IMR-90 (cell line): ENCODE measurements at regions of chr5 and their contacts with region 1.

Region 1: DNA sequence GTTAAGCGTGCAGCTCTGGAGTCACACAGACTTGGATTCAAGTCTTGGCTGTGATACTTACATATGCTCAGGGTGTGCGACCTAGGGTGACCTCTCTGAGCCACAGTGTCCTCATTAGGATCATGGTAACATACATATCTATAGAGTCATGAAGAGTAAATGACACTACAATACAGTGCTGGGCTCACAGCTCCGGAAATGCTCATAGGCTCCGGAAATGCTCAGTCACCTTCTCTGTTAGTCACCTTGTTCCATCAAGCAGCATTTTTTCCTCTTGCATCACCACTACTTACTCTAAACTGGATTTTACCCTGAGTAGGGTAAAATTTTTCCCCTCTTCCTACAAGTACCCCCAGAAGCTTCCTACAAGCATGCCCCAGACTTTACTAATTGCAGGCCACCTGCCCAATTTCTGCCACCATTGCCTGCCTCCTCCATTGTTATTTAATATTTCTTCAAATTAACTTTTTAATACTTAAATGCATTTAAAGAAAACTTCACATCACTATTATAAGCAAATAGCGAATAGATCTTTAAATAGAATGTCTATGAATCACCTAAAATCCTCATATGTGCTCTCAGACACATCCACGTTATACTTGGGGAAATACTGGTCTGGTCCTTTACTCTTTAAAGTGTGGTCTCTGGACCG is 147.6 kb upstream of the SPRY4 start:
- DNase-seq: peak; percentile 96
- ATAC-seq: peak; percentile 90
- H3K4me3 ChIP-seq: no peak overlapping the region
- H3K27ac ChIP-seq: peak overlapping the region; percentile 62; the same call in 1 of the 2 replicates
- H3K4me1 ChIP-seq: peaks cover 5% of the 10 kb centered on the region
- H3K27me3 ChIP-seq: no peaks in the 10 kb centered on the region
- CTCF ChIP-seq: no peak
- POLR2A ChIP-seq: no peak
- RAD21 ChIP-seq: no peak

Region 2: DNA sequence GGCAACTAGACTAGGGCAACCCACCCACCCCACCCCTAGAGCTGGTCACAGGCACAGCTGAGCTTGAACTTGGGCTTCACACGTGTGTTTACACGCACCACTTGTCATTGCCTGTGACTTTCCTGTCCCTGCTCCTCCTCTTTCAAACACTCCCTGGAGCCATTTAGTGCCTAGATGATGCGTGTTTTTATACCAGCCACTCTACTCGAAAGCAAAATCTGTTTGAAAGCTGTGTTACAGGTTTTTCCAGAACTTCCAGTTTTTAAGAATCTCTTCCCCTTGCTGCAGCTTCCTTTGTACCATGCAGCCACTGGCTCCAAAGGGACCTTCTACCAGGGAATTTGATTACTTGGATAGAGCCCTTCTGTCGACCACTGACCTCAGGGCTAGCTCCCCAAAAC is 68.9 kb before region 1 on chr5:
- CTCF ChIA-PET with region 1: no interaction called
- POLR2A ChIA-PET with region 1: no interaction called
- dilution Hi-C with region 1: no loop called
- in situ Hi-C with region 1: no loop called
- intact Hi-C with region 1: no loop called
- DNase-seq: no peak
- ATAC-seq: no peak
- H3K4me3 ChIP-seq: no peak overlapping the region
- H3K27ac ChIP-seq: no peak overlapping the region
- H3K4me1 ChIP-seq: 0 out of 2 replicates have a peak, but pooled peaks cover 2% of the 10 kb centered on the region
- H3K27me3 ChIP-seq: no peaks in the 10 kb centered on the region
- CTCF ChIP-seq: no peak
- POLR2A ChIP-seq: no peak
- RAD21 ChIP-seq: no peak

Region 3: DNA sequence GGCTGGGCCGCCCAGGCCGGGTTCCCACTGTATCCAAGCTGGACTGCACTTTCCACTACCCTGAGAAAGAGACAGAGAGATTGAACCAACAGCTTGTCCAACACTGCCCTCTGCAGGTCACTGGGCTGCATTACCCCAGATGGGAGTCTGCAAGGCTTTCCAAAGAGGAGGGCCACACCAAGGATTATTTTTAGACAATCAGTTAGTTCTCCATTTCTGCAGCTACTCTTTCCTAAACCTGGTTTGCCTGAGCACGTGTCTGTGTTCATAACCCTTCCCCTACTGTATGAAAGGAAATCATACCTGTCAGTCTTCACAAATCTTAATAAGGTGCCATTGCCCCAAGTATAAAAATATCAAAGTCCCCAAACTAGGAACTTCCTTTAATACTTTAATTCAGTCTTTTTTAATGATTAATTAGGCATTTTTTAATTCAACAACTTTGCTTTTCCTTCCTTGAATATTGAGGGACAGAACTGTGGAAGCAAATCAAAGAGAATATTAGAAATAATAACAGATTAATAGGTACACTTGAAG is 226.8 kb after region 1 on chr5:
- CTCF ChIA-PET with region 1: no interaction called
- POLR2A ChIA-PET with region 1: no interaction called
- dilution Hi-C with region 1: no loop called
- in situ Hi-C with region 1: no loop called
- intact Hi-C with region 1: no loop called
- DNase-seq: peak; percentile 84
- ATAC-seq: peak; percentile 98
- H3K4me3 ChIP-seq: no peak overlapping the region
- H3K27ac ChIP-seq: no peak overlapping the region
- H3K4me1 ChIP-seq: peaks cover 10% of the 10 kb centered on the region
- H3K27me3 ChIP-seq: no peaks in the 10 kb centered on the region
- CTCF ChIP-seq: peak; percentile 99
- POLR2A ChIP-seq: peak; percentile 69
- RAD21 ChIP-seq: peak; percentile 100

Region 4: DNA sequence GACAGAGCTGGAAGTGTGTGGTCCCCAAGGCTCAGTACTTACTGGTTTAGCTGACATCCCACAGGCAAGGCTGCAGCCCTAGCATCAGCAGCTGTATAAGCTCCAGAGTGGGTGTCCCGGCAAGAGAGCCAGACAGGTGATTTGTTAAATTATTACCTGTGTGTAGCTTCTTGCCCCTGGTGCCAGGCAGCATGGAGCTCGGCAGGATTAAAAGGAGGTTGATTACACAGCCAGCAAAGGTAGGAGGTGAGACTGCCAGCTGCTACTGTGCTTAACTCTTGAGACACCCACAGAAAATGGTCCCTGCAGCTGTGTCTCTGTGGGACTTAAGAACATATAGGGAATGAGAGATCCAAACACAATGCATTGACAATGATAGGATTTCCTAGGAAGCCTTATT is 352.0 kb after region 1 on chr5:
- CTCF ChIA-PET with region 1: no interaction called
- POLR2A ChIA-PET with region 1: interaction called, 11 read pairs
- dilution Hi-C with region 1: no loop called
- in situ Hi-C with region 1: no loop called
- intact Hi-C with region 1: no loop called
- DNase-seq: no peak
- ATAC-seq: no peak
- H3K4me3 ChIP-seq: no peak overlapping the region
- H3K27ac ChIP-seq: no peak overlapping the region
- H3K4me1 ChIP-seq: peaks cover 31% of the 10 kb centered on the region
- H3K27me3 ChIP-seq: no peaks in the 10 kb centered on the region
- CTCF ChIP-seq: no peak
- POLR2A ChIP-seq: no peak
- RAD21 ChIP-seq: no peak